H1 (cell line): ENCODE measurements at regions of chr16 and their contacts with region 1.

Region 1: DNA sequence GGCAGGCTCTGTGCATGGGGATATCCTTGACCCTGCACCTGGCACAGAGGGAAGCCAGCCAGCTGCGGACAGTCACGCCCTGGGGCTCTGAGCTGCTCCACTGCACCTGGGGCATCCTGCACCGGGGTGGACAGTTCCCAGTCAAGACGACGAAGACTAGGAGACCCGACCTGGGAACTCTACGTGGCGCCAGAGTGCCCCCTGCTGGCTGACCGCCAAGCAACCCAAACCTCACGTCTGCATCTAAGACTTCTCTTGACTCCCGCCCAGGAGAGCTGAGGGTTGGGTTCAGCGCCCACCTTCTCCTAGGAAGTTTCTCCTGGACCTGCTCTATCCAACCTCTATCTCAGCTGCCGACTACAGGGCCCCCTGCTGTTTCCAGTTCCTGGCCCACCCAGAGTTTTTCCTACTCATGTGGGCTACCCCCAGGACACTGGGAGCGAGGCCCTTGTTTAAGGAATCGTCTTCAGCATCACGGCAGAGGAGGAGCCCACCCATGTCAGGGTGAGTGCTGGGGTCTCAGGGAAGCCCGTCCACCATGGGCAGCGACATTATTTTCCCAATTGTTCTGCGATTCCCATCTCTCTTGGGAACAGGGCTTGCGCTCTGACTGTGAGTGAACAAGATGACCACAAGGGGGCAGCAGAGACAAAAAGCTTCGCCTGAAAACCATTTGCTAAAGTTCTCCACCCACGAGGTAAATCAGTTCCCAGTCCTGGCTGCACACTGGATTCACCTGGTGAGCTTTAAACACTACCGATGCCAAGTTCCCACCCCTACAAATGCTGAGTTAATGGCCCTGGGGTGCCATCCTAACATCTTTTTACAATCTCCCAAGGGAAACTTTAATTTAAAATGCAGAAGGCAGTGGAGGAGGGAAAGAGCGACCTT is 29.3 kb downstream of the TLE7 start:
- DNase-seq: peak; percentile 80 to 94
- H3K4me3 ChIP-seq: peak overlapping the region; percentile 29 to 68 (median 59); a peak in 7 of 8 replicates
- H3K27ac ChIP-seq: peak overlapping the region; percentile 16; the same call in 1 of the 2 replicates
- H3K4me1 ChIP-seq: peaks cover 0 to 4% (median 0%) of the 10 kb centered on the region in 4 experiments; a peak in 2 of 7 replicates
- H3K27me3 ChIP-seq: peaks cover 0 to 2% (median under 1%) of the 10 kb centered on the region in 4 experiments; a peak in 1 of 7 replicates
- CTCF ChIP-seq: peak; percentile 84 to 90 (median 86)
- EP300 ChIP-seq: no peak
- POLR2A ChIP-seq: no peak
- RAD21 ChIP-seq: peak; percentile 86 to 91

Region 2: GRCh38 chr16:71258372-71258771 is 154.1 kb before region 1 on chr16:
- CTCF ChIA-PET with region 1: no interaction called
- POLR2A ChIA-PET with region 1: no interaction called
- DNase-seq: no peak
- H3K4me3 ChIP-seq: no peak overlapping the region
- H3K27ac ChIP-seq: no peak overlapping the region
- H3K4me1 ChIP-seq: peaks cover 0 to 10% (median 5%) of the 10 kb centered on the region in 4 experiments; a peak in 3 of 7 replicates
- H3K27me3 ChIP-seq: no peaks in the 10 kb centered on the region; a peak in 1 of 7 replicates
- CTCF ChIP-seq: no peak
- EP300 ChIP-seq: no peak
- POLR2A ChIP-seq: no peak
- RAD21 ChIP-seq: no peak

Region 3: GRCh38 chr16:71311553-71312158 is 100.9 kb before region 1 on chr16:
- CTCF ChIA-PET with region 1: interaction called, 22 read pairs
- POLR2A ChIA-PET with region 1: no interaction called
- DNase-seq: peak; percentile 15 to 70
- H3K4me3 ChIP-seq: no peak overlapping the region
- H3K27ac ChIP-seq: no peak overlapping the region
- H3K4me1 ChIP-seq: peaks cover 0 to 6% (median 0%) of the 10 kb centered on the region in 4 experiments; a peak in 3 of 7 replicates
- H3K27me3 ChIP-seq: no peaks in the 10 kb centered on the region
- CTCF ChIP-seq: peak; percentile 55 to 92 (median 87)
- EP300 ChIP-seq: no peak
- POLR2A ChIP-seq: no peak
- RAD21 ChIP-seq: peak; percentile 91 to 95

Region 4: DNA sequence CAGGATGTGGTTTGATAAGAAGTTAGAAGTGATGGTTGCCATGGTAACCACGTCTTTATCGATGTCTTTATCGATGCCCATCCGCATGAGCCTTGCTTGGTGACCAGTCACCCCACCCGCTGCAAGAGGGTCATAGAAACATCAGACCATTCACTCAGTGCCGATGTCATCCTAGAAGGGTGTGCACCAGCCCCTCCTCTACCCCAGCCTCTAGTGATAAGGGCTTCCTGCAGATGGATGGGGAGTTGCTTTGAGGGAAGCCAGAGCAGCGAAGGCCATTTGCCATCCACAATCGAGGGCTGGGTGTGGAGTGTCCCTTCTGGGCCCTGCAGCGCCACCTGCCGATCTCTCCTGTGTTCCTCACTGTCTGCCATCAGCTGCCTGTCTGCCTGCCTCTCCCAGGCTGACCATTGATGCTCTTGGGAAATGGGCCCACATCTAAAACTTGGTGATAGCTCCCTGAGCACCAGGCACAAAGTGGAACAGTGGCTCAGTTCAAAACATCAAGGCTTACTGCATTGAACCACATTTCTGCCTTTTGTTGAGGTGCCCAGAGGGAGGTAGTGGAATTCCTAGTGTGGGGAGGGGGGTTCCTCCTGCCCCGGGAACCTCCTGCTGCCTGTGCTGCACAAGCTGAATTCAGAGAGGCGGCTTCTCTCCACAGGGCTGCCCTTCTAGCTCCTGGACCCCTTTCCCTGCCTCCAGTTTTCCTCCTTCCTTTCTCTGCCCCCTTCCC is 45.1 kb before region 1 on chr16:
- CTCF ChIA-PET with region 1: interaction called, 54 read pairs
- POLR2A ChIA-PET with region 1: interaction called, 3 read pairs
- DNase-seq: peak; percentile 67 to 93
- H3K4me3 ChIP-seq: no peak overlapping the region
- H3K27ac ChIP-seq: no peak overlapping the region
- H3K4me1 ChIP-seq: no peaks in the 10 kb centered on the region
- H3K27me3 ChIP-seq: no peaks in the 10 kb centered on the region
- CTCF ChIP-seq: peak; percentile 79 to 96 (median 95)
- EP300 ChIP-seq: no peak
- POLR2A ChIP-seq: no peak
- RAD21 ChIP-seq: peak; percentile 76 to 81

Region 5: DNA sequence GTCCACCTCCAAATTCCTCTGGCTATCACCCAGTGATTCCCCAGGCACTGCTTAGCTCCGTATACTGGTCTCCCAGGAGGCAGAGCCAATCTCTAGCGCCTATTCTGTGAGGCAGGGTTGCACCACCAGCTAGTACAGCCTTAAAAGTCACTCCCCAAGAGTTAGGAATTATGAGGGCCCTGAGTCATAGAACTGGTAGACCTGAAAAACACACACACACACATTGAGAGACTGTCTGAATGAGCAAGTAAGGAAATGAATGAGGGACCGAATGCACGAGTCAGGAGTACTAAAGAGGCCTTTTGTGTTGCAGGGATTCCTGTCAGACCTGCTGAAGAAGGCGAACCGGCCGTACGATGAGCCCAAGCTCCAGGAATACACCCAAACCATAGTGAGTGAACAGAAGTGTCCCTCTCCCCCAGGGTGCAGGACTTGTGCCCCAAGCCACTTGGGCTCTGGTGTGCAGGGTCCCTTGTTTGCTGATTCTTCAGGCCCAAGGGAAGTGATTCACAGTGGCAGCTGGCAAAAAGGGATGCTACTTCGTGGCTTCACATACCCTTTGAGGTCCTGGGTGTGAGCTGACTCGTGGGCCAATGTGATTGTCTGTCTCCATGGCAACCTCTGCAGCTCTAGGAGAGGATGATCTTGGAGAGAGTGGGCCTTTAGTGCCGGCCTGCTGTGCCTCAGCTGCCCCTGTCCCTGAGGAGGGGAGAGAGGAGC is 29.3 kb before region 1 on chr16:
- CTCF ChIA-PET with region 1: interaction called, 23 read pairs
- POLR2A ChIA-PET with region 1: interaction called, 4 read pairs
- DNase-seq: no peak
- H3K4me3 ChIP-seq: no peak overlapping the region
- H3K27ac ChIP-seq: no peak overlapping the region
- H3K4me1 ChIP-seq: peaks cover 12 to 20% (median 16%) of the 10 kb centered on the region in 4 experiments; a peak in 5 of 7 replicates
- H3K27me3 ChIP-seq: 0 out of 7 replicates have a peak, but pooled peaks cover 0 to 2% (median 0%) of the 10 kb centered on the region in 4 experiments
- CTCF ChIP-seq: no peak
- EP300 ChIP-seq: no peak
- POLR2A ChIP-seq: no peak
- RAD21 ChIP-seq: no peak

Region 6: GRCh38 chr16:71402007-71402406 is 10.5 kb before region 1 on chr16:
- CTCF ChIA-PET with region 1: interaction called, 24 read pairs
- POLR2A ChIA-PET with region 1: no interaction called
- DNase-seq: no peak
- H3K4me3 ChIP-seq: no peak overlapping the region
- H3K27ac ChIP-seq: no peak overlapping the region
- H3K4me1 ChIP-seq: peaks cover 0 to 15% (median 6%) of the 10 kb centered on the region in 4 experiments; a peak in 6 of 7 replicates
- H3K27me3 ChIP-seq: no peaks in the 10 kb centered on the region
- CTCF ChIP-seq: no peak
- EP300 ChIP-seq: no peak
- POLR2A ChIP-seq: no peak
- RAD21 ChIP-seq: no peak

Region 7: DNA sequence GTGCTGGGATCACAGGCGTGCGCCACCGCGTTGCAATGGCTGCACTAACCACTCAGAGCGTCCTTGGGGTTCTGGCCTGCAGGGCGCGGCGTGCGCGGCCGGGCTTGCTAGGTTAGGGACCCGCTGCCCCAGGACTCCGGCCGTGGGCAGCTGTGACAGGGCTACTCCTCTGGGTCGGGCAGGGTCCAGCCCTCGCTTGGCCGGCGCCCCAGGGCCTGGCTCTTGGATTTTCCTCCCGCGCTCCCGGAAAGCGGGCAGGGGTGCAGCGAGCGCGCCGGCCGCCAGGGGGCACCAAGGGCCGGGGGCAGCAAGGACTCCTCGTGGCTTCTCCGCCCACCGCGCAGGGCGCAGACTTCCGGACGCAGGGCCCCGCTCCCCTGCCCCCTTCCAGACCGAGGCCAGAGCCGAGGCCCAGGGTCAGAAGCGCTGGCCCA is 28.9 kb after region 1 on chr16:
- CTCF ChIA-PET with region 1: interaction called, 11 read pairs
- POLR2A ChIA-PET with region 1: interaction called, 3 read pairs
- DNase-seq: peak in 1 of 2 experiments; percentile 95
- H3K4me3 ChIP-seq: no peak overlapping the region
- H3K27ac ChIP-seq: no peak overlapping the region
- H3K4me1 ChIP-seq: no peaks in the 10 kb centered on the region; a peak in 1 of 7 replicates
- H3K27me3 ChIP-seq: no peaks in the 10 kb centered on the region
- CTCF ChIP-seq: peak; percentile 71 to 76 (median 74)
- EP300 ChIP-seq: no peak
- POLR2A ChIP-seq: no peak
- RAD21 ChIP-seq: peak; percentile 49 to 65

Region 8: DNA sequence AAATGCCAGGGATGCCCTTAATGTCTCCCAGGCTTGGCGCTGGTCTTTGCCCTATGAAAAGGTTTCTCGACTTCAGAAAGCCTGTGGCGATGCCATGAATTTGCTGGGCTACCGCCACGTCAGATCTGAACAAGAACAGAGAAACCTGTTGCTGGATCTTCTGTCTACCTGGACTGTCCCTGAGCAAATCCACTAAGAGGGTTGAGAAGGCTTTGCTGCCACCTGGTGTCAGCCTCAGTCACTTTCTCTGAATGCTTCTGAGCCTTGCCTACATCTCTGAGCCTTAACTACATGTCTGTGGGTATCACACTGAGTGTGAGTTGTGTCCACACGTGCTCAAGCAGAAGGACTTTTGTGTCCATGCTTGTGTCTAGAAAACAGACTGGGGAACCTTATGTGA is 125.1 kb after region 1 on chr16:
- CTCF ChIA-PET with region 1: interaction called, 12 read pairs
- POLR2A ChIA-PET with region 1: no interaction called
- DNase-seq: peak in 1 of 2 experiments; percentile 76
- H3K4me3 ChIP-seq: no peak overlapping the region
- H3K27ac ChIP-seq: no peak overlapping the region
- H3K4me1 ChIP-seq: no peaks in the 10 kb centered on the region
- H3K27me3 ChIP-seq: no peaks in the 10 kb centered on the region
- CTCF ChIP-seq: peak; percentile 45 to 89 (median 84)
- EP300 ChIP-seq: no peak
- POLR2A ChIP-seq: no peak
- RAD21 ChIP-seq: peak; percentile 87 to 91